GM10248 (cell line): ENCODE measurements at regions of chr10 and their contacts with region 1.

Region 1: GRCh38 chr10:103685880-103686669 is 169.3 kb downstream of the SH3PXD2A start:
- DNase-seq: peak; percentile 86
- CTCF ChIP-seq: peak; percentile 96

Region 2: DNA sequence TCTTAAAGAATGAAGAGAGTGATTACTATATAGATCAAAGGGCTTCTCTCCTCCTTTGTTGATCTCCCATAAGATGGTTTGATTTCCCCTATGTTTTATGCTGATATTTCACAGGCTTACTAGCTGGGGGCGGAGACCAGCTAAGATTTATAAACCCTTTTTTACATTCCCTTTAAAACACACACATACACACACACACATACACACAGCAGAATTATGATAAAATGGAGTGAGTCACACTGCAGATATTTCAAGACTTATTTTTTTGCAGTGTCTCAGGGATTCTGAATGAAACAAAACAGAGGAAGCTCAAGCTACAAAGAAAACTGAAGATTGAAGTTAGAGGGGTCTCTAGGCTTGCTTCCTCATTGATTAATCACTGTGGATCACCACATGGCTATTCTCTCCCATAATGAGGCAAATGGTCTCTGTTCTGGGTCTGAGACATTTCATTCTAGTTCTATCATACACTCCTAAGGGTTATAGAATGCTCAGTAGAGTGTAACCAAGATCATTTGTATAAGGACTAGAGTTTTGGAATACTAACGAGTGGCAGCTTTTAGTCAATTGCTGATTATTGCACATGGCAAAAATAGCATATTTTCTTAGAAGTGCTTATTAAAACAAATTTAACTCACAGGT is 390.6 kb before region 1 on chr10:
- CTCF ChIA-PET with region 1: no interaction called
- POLR2A ChIA-PET with region 1: no interaction called
- DNase-seq: no peak
- CTCF ChIP-seq: no peak

Region 3: DNA sequence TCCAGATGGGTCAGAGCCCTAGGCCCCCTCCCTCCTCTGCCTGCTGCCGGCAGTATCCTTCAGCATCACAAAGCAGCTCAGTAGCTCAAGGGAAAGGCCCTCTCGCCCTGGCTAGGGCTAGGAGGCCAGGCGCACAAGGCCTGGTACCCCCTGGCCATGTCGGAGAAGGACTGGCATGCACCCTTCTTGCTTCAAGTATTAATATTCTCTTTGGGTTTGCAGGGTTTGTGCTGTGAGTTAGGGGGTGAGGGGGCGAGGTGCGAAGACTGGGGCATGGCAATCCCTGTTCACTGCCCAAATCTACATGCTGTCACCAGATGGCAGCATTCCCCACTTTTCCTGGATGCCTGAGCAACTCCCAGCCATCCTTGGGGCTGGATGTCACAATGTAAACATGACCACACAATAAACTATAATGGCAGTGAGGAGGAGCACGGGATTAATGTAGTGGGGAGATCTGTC is 87.4 kb before region 1 on chr10:
- CTCF ChIA-PET with region 1: interaction called, 196 read pairs
- POLR2A ChIA-PET with region 1: no interaction called
- DNase-seq: peak; percentile 62
- CTCF ChIP-seq: peak; percentile 57

Region 4: GRCh38 chr10:103620352-103620740 is 65.7 kb before region 1 on chr10:
- CTCF ChIA-PET with region 1: interaction called, 27 read pairs
- POLR2A ChIA-PET with region 1: no interaction called
- DNase-seq: no peak
- CTCF ChIP-seq: no peak

Region 5: GRCh38 chr10:103659674-103660363 is 26.3 kb before region 1 on chr10:
- CTCF ChIA-PET with region 1: interaction called, 38 read pairs
- POLR2A ChIA-PET with region 1: no interaction called
- DNase-seq: peak; percentile 88
- CTCF ChIP-seq: no peak

Region 6: GRCh38 chr10:103671122-103671895 is 14.8 kb before region 1 on chr10:
- CTCF ChIA-PET with region 1: interaction called, 27 read pairs
- POLR2A ChIA-PET with region 1: no interaction called
- DNase-seq: no peak
- CTCF ChIP-seq: no peak

Region 7: DNA sequence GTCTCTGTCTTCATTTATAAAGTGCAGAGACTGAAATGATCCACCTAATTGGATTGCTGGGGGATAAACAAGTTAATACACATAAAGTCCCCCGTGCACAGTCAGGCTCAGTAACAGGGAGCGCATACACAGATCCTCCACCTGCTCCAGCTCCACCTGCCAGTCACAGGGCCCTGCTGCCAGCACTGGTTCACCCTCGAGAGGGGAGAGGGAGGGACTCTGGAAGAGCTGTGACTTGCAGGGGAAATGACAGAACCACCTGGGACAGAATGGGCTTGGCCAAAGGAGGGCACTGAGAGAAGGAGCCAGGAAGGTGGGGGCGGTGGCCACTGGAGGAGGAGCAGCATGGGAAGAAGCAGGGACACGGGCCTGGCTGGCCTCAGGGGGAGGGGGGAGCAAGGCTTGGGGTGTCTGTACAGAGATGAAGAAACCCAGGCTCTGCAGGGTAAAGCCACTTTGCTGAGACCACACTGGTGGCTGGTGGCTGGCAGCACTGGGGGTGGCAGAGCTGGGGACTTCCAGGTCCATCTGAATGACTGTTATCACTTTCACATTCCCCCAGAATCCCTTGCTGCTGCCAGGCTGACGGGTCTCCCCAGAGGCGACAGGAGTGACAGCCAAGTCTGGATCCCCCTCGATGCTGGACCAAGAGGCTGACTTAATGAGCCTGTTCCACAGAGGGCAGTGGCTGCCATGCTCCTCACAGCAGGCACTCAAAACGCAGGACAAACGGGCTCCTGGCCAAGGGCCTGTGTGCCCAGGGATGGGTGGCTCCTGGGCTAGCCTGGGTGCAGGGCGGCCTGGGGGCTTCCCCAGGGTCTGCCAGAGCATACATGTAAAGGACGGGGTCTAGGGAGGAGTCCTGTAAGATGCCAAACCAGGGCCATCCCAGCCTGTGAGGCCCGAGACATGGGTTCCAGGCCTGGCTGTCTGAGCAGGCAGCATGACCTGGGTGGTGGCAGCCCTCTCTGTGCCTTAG is 18.2 kb after region 1 on chr10:
- CTCF ChIA-PET with region 1: interaction called, 69 read pairs
- POLR2A ChIA-PET with region 1: no interaction called
- DNase-seq: no peak
- CTCF ChIP-seq: no peak

Region 8: DNA sequence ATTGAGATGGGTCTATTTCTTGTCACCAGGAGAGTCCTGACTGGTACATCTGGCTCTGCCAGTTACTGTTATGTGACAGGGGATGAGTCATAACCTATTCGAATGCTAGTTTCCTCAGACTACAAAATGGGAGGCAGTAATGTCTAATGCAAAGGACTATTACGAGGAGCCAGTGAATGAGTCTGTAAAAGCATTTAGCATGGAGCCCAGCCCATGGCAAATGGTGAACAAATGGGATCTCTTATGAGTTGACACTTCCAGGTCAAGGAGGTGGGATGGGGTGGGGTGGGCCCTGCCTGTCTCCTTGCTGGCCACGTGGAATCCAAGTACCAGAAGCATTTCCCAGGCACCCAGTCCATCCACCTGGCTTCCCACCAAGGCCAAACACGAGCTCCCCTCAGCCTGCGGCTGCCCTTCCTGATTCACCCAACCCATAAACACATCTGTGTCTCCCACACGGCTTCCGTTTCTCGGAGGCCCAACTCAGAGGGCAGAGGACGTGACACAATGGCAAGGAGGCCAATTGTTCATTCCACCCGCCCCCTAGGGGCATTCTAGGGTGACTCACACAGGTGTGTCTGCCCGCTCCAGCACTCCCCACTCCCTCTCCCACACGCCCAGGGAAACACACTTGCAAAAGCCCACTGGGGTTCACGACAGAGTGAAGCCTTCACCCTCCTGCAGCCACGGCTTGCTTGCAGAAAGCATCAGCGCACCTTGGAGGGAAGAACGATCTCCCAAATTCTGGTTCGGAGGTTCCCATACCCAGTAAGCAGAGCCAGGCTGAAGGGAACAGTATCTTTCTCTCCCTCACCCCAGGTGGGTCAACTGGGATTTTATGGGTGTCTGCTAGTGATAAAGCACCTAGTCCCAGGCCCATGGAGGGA is 59.5 kb after region 1 on chr10:
- CTCF ChIA-PET with region 1: no interaction called
- POLR2A ChIA-PET with region 1: no interaction called
- DNase-seq: no peak
- CTCF ChIP-seq: no peak

Region 9: GRCh38 chr10:103859161-103860086 is 173.3 kb after region 1 on chr10:
- CTCF ChIA-PET with region 1: no interaction called
- POLR2A ChIA-PET with region 1: no interaction called
- DNase-seq: peak; percentile 60
- CTCF ChIP-seq: peak; percentile 46